AG04450 (cell line): ENCODE measurements at regions of chr3 and their contacts with region 1.

Region 1: DNA sequence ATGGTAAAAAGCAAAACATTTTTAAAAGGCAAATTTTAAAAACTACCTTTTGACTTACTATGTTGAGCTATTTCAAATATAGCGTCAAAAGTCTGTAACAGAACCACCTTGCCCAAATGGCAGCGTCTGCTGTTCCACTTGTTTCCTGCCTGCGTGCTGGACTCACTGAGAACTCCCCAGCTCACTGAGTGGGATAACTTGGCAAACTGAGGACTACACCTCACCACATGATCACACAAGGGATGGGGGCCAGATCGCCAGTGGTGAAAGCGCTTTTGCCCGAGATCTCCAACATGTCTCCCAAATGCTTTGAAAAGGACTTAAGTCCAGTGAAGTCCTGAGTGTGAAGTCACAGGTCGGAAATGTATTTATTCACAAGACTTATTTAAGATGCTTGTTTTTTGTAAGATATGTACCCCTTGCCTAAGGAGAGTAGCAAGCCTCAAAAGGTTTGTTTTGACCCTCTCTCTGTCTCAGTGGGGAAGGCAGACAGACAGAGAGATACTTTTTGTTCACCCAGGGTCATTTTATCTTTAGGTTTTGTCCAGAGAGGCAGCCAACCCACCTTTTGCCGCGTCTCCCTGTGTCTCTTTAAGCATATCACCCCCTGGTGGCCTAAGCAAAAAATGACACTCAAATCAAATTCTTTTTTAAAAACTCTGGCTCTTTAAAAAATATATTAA is 192.6 kb downstream of the PDZRN3 start:
- DNase-seq: no peak
- H3K4me3 ChIP-seq: no peak overlapping the region
- H3K27ac ChIP-seq: no peak overlapping the region
- H3K27me3 ChIP-seq: no peaks in the 10 kb centered on the region
- CTCF ChIP-seq: peak; percentile 72

Region 2: DNA sequence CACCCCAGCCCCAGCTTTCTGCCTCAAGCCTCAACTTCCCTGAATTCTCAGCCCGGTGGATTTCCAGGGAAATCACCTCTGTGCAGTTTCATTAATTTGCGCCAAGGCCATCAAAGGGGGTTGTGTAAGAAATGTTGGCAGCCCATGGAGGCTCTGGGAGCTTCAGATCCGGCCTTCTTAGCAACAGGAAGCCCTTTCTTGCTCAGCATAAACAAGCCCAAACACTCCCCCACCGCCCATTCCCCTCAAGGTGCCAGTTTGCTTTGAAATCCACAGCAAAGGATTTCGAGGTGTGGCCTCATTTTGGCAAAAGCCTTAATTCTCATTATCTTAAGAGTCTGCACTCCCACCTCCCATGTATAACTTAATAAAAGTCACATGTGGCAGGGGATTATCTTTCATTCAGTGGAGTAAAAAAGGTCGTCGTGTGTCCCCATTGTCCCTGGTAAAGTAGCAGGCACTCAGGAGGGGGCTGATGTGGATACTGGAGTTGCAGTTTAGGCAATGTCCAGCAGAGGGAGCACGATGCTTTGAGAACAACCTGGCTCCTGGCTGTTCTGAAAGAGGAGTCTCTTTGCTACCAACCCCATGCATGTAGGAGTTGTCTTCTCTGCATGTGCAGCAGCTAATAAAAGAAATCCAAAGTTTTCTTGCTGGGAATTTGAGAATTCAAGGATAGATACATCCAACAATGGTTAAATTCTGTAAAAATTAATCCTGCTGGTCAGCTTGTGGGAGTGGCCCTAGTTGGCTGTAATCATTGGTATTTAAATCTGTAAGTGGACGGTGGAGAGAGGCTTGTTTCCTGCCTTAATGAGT is 331.2 kb before region 1 on chr3:
- CTCF ChIA-PET with region 1: interaction called, 25 read pairs
- POLR2A ChIA-PET with region 1: no interaction called
- DNase-seq: peak; percentile 46
- H3K4me3 ChIP-seq: no peak overlapping the region
- H3K27ac ChIP-seq: no peak overlapping the region
- H3K27me3 ChIP-seq: peaks cover 9% of the 10 kb centered on the region
- CTCF ChIP-seq: peak; percentile 96

Region 3: GRCh38 chr3:73419179-73419803 is 12.9 kb before region 1 on chr3:
- CTCF ChIA-PET with region 1: interaction called, 20 read pairs
- POLR2A ChIA-PET with region 1: interaction called, 3 read pairs
- DNase-seq: peak; percentile 72
- H3K4me3 ChIP-seq: peak overlapping the region; percentile 46
- H3K27ac ChIP-seq: peak overlapping the region; percentile 81
- H3K27me3 ChIP-seq: no peaks in the 10 kb centered on the region
- CTCF ChIP-seq: peak; percentile 61

Region 4: GRCh38 chr3:73448761-73449301 is 16.7 kb after region 1 on chr3:
- CTCF ChIA-PET with region 1: interaction called, 12 read pairs
- POLR2A ChIA-PET with region 1: no interaction called
- DNase-seq: no peak
- H3K4me3 ChIP-seq: no peak overlapping the region
- H3K27ac ChIP-seq: no peak overlapping the region
- H3K27me3 ChIP-seq: no peaks in the 10 kb centered on the region
- CTCF ChIP-seq: no peak